ENCODE measurements at regions of chr1 and their contacts with region 1.

Region 1: DNA sequence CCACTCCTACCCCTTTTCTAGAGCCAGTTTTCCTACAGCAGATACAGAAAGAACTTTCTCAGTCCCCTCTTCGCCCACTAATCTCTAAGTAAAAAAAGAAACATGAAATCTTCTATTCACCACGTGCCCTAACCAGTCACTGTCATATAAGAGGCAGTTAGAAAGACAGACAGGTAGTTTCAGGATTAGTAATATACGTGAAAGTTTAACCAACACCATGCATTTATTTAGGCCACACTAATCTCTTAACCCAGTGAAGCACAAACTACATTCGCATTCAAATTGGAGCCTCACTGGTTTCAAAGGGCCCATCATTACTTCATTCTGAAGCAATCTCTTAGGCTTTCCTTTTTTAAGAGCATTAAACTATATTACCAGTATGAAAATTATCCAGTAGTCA is 10.1 kb downstream of the GPATCH2 start:
- DNase-seq: no peak
- H3K4me3 Mint-ChIP-seq: no peak overlapping the region
- H3K27ac Mint-ChIP-seq: no peak overlapping the region
- H3K4me1 Mint-ChIP-seq: peaks cover 27% of the 10 kb centered on the region
- H3K27me3 Mint-ChIP-seq: no peaks in the 10 kb centered on the region

Region 2: GRCh38 chr1:217482356-217483102 is 138.3 kb before region 1 on chr1:
- CTCF ChIA-PET with region 1: no interaction called
- POLR2A ChIA-PET with region 1: no interaction called
- intact Hi-C with region 1: loop called (anchors 1 kb)
- DNase-seq: peak; percentile 82
- H3K4me3 Mint-ChIP-seq: no peak overlapping the region
- H3K27ac Mint-ChIP-seq: peak overlapping the region; percentile 55
- H3K4me1 Mint-ChIP-seq: peaks cover 23% of the 10 kb centered on the region
- H3K27me3 Mint-ChIP-seq: no peaks in the 10 kb centered on the region

Region 3: GRCh38 chr1:217495249-217495648 is 125.6 kb before region 1 on chr1:
- CTCF ChIA-PET with region 1: no interaction called
- POLR2A ChIA-PET with region 1: no interaction called
- intact Hi-C with region 1: loop called (anchors 5 kb)
- DNase-seq: no peak
- H3K4me3 Mint-ChIP-seq: no peak overlapping the region
- H3K27ac Mint-ChIP-seq: no peak overlapping the region
- H3K4me1 Mint-ChIP-seq: peaks cover 7% of the 10 kb centered on the region
- H3K27me3 Mint-ChIP-seq: no peaks in the 10 kb centered on the region

Region 4: DNA sequence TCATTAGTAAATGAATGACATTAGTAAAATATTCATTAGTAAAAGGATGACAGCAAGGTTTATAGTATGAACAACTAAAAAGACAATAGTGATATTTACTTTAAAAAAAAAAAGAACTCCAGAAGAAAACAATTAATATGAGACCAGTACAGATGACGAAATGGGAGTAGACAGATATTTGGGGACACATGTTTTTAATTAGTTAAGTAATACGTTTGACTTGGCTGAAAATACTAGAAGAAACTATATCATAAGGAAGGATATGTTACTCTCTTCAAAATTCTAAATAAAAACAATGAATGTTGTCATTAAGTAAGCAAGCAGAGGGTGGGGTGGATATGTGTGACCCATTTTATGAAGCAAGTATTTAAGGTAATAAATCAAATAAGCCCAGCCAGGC is 51.8 kb before region 1 on chr1:
- CTCF ChIA-PET with region 1: no interaction called
- POLR2A ChIA-PET with region 1: no interaction called
- intact Hi-C with region 1: no loop called
- DNase-seq: no peak
- H3K4me3 Mint-ChIP-seq: no peak overlapping the region
- H3K27ac Mint-ChIP-seq: no peak overlapping the region
- H3K4me1 Mint-ChIP-seq: no peaks in the 10 kb centered on the region
- H3K27me3 Mint-ChIP-seq: no peaks in the 10 kb centered on the region

Region 5: GRCh38 chr1:217630711-217631591 is 10.1 kb after region 1 on chr1 and contains the starts of genes GPATCH2 and SPATA17:
- CTCF ChIA-PET with region 1: interaction called, 9 read pairs
- POLR2A ChIA-PET with region 1: interaction called, 8 read pairs
- intact Hi-C with region 1: loop called (anchors 1 kb)
- DNase-seq: peak; percentile 83
- H3K4me3 Mint-ChIP-seq: peak within 1 kb of the TSS; percentile 88
- H3K27ac Mint-ChIP-seq: peak within 1 kb of the TSS; percentile 96
- H3K4me1 Mint-ChIP-seq: peaks cover 28% of the 10 kb centered on the region
- H3K27me3 Mint-ChIP-seq: peaks cover 2% of the 10 kb centered on the region
- total RNA-seq, gene GPATCH2: 7.8 to 7.9 TPM
- total RNA-seq, gene SPATA17: not detected

Region 6: DNA sequence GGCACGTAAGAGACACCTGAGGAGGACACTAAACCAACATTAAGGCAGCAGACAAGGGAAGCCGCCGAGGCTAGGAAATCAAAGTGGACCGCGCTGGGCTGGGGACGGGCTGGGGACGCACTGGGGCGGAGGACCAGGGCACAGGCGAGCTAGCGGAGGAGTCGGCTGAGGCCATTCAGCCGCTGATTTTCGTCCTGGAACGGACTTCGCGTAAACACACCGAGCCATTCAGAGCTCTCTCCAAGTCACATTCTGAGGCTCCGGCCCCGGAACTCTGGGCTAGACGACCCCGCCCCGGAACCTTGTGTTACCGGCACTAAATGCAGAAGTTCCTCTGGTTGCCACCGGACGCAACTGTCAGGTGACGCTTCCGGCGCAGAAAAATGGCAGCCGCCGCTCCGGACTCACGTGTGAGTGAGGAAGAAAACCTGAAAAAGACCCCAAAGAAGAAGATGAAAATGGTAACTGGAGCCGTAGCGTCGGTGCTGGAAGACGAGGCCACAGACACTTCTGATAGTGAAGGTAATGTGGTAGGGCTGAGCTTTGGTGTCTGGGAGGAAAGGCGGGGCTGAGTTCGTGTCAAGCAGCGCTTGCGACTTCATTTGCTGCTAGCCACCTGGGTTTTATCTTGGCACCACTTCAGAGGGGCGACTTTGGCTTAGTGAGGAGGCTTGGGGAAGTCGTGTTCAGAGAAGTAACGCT is 664.3 kb after region 1 on chr1 and contains the start of gene RRP15:
- CTCF ChIA-PET with region 1: no interaction called
- POLR2A ChIA-PET with region 1: no interaction called
- intact Hi-C with region 1: loop called (anchors 10 kb)
- DNase-seq: peak; percentile 92
- H3K4me3 Mint-ChIP-seq: peak within 1 kb of the TSS; percentile 97
- H3K27ac Mint-ChIP-seq: peak within 1 kb of the TSS; percentile 80
- H3K4me1 Mint-ChIP-seq: peaks cover 25% of the 10 kb centered on the region
- H3K27me3 Mint-ChIP-seq: peaks cover 11% of the 10 kb centered on the region
- total RNA-seq, gene RRP15: 18.0 to 18.8 TPM